CD14-positive monocyte (primary cell): ENCODE measurements at regions of chr4 and their contacts with region 1.

Region 1: DNA sequence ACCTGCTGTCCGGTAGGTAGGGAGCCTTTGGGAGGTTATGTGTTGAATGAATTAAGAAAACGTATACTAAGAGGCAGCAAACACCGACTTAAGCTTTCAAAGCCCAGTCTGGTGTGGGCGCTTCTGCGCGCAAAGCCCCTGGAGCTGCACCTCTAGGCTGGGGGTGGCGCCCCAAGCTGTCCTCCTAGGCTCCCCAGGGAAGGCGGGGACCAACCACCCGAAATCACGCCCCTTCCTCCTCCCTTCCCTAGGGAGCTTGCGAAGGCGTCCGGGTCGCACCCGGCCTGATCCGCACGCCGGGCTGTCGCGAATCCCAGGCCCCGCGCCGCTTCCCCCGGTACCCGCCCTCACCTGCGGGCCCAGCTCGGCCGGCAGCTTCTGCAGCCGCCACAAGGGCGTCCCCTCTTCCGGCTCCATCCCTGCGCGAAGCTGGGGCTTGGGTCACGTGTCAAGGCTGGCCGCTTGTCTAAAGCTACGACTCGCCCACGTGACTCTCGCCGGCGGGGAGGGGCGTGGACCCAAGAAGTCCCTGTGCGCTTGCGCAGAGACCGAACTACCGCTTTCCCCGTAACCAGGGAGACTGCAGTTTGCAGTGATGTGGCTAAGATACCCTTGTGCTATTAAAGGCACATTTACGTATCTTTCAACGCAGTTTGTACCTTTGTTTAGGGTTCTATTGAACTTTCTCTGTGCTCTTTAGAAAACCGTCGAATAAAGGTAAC is at the start of gene COMMD8:
- DNase-seq: peak; percentile 97 to 99 (median 97)
- H3K4me3 ChIP-seq: peak within 1 kb of the TSS; percentile 87 to 95 (median 91)
- H3K4me3 Mint-ChIP-seq: peak within 1 kb of the TSS; percentile 80 to 90
- H3K27ac ChIP-seq: peak within 1 kb of the TSS; percentile 57 to 89
- H3K27ac Mint-ChIP-seq: peak within 1 kb of the TSS; percentile 73 to 95 (median 84)
- H3K4me1 ChIP-seq: peaks cover 23 to 49% of the 10 kb centered on the region in 2 donors
- H3K4me1 Mint-ChIP-seq: peaks cover 38% of the 10 kb centered on the region
- H3K27me3 ChIP-seq: no peaks in the 10 kb centered on the region
- H3K27me3 Mint-ChIP-seq: no peaks in the 10 kb centered on the region
- CTCF ChIP-seq: peak; percentile 22
- polyA plus RNA-seq, gene COMMD8: 11.5 to 90.8 (median 71.8) TPM

Region 2: GRCh38 chr4:47270201-47270888 is 193.1 kb before region 1 on chr4:
- intact Hi-C with region 1: no loop called
- DNase-seq: no peak
- H3K4me3 ChIP-seq: no peak overlapping the region
- H3K4me3 Mint-ChIP-seq: no peak overlapping the region
- H3K27ac ChIP-seq: no peak overlapping the region
- H3K27ac Mint-ChIP-seq: no peak overlapping the region
- H3K4me1 ChIP-seq: no peaks in the 10 kb centered on the region
- H3K4me1 Mint-ChIP-seq: no peaks in the 10 kb centered on the region
- H3K27me3 ChIP-seq: no peaks in the 10 kb centered on the region
- H3K27me3 Mint-ChIP-seq: peaks cover 0 to 2% (median 2%) of the 10 kb centered on the region in 3 donors
- CTCF ChIP-seq: no peak

Region 3: DNA sequence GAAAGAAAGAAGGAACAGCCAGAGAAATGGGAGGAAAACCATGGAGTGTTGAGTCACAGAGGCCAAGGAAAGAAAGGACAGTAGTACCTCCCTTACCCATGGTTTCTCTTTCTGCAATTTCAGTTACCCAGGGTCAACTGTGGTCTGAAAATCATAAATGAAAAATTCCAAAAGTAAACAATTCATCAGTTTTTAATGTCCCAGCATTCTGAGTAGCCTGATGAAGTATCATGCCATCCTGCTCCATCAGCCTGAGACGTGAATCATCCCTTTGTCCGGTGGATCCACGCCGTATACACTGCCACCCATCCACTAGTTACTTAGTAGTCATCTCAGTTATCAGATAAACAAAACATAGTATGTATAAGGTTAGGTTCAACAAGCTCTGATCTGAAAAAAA is 114.1 kb before region 1 on chr4:
- intact Hi-C with region 1: no loop called
- DNase-seq: no peak
- H3K4me3 ChIP-seq: no peak overlapping the region
- H3K4me3 Mint-ChIP-seq: no peak overlapping the region
- H3K27ac ChIP-seq: no peak overlapping the region
- H3K27ac Mint-ChIP-seq: no peak overlapping the region
- H3K4me1 ChIP-seq: no peaks in the 10 kb centered on the region
- H3K4me1 Mint-ChIP-seq: no peaks in the 10 kb centered on the region
- H3K27me3 ChIP-seq: peaks cover 0 to 2% of the 10 kb centered on the region in 2 donors
- H3K27me3 Mint-ChIP-seq: peaks cover 0 to 8% (median 3%) of the 10 kb centered on the region in 3 donors
- CTCF ChIP-seq: no peak

Region 4: GRCh38 chr4:47485047-47485692 is 21.8 kb after region 1 on chr4 and contains the start of gene ATP10D:
- intact Hi-C with region 1: loop called in 1 of 2 experiments (anchors 2 kb)
- DNase-seq: peak; percentile 90 to 93 (median 91)
- H3K4me3 ChIP-seq: peak within 1 kb of the TSS; percentile 64 to 94 (median 94)
- H3K4me3 Mint-ChIP-seq: peak within 1 kb of the TSS; percentile 98
- H3K27ac ChIP-seq: peak within 1 kb of the TSS; percentile 93 to 97
- H3K27ac Mint-ChIP-seq: peak within 1 kb of the TSS; percentile 98 to 100 (median 99)
- H3K4me1 ChIP-seq: peaks cover 38 to 60% of the 10 kb centered on the region in 2 donors
- H3K4me1 Mint-ChIP-seq: peaks cover 38% of the 10 kb centered on the region
- H3K27me3 ChIP-seq: no peaks in the 10 kb centered on the region
- H3K27me3 Mint-ChIP-seq: no peaks in the 10 kb centered on the region
- CTCF ChIP-seq: no peak
- polyA plus RNA-seq, gene ATP10D: 8.4 to 16.9 (median 14.1) TPM

Region 5: GRCh38 chr4:47510506-47511143 is 47.2 kb after region 1 on chr4:
- intact Hi-C with region 1: loop called in 1 of 2 experiments (anchors 1 kb)
- DNase-seq: peak; percentile 81 to 88 (median 83)
- H3K4me3 ChIP-seq: no peak overlapping the region
- H3K4me3 Mint-ChIP-seq: no peak overlapping the region
- H3K27ac ChIP-seq: peak overlapping the region; percentile 72 to 94
- H3K27ac Mint-ChIP-seq: peak overlapping the region; percentile 91 to 98 (median 95)
- H3K4me1 ChIP-seq: peaks cover 10 to 17% of the 10 kb centered on the region in 2 donors
- H3K4me1 Mint-ChIP-seq: peaks cover 15% of the 10 kb centered on the region
- H3K27me3 ChIP-seq: no peaks in the 10 kb centered on the region
- H3K27me3 Mint-ChIP-seq: peaks cover 0 to 2% (median 2%) of the 10 kb centered on the region in 3 donors
- CTCF ChIP-seq: peak; percentile 71

Region 6: DNA sequence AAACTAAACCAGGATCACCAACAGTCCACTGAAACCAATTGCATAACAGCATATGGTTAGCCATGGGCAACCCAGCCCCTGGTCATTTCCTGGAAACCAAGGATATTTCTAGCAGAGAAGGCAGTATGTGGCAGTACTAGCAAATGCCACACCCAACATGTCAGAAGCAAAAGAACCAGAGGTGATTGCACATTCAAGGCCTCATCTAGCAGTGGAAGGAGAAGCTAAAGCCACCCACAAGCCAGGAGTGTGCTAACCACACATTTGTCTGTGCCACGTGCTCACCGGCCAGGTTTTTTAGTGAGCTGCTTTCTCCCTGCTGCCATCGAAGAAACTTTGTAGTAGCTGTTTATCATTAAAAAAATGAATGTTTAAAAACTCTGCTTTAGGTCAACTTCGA is 764.3 kb after region 1 on chr4:
- intact Hi-C with region 1: no loop called
- DNase-seq: peak; percentile 56 to 60 (median 56)
- H3K4me3 ChIP-seq: no peak overlapping the region
- H3K4me3 Mint-ChIP-seq: no peak overlapping the region
- H3K27ac ChIP-seq: peak overlapping the region; percentile 24 to 47
- H3K27ac Mint-ChIP-seq: peak overlapping the region; percentile 69 to 89 (median 77)
- H3K4me1 ChIP-seq: peaks cover 40 to 60% of the 10 kb centered on the region in 2 donors
- H3K4me1 Mint-ChIP-seq: peaks cover 58% of the 10 kb centered on the region
- H3K27me3 ChIP-seq: no peaks in the 10 kb centered on the region
- H3K27me3 Mint-ChIP-seq: no peaks in the 10 kb centered on the region
- CTCF ChIP-seq: no peak

Region 7: DNA sequence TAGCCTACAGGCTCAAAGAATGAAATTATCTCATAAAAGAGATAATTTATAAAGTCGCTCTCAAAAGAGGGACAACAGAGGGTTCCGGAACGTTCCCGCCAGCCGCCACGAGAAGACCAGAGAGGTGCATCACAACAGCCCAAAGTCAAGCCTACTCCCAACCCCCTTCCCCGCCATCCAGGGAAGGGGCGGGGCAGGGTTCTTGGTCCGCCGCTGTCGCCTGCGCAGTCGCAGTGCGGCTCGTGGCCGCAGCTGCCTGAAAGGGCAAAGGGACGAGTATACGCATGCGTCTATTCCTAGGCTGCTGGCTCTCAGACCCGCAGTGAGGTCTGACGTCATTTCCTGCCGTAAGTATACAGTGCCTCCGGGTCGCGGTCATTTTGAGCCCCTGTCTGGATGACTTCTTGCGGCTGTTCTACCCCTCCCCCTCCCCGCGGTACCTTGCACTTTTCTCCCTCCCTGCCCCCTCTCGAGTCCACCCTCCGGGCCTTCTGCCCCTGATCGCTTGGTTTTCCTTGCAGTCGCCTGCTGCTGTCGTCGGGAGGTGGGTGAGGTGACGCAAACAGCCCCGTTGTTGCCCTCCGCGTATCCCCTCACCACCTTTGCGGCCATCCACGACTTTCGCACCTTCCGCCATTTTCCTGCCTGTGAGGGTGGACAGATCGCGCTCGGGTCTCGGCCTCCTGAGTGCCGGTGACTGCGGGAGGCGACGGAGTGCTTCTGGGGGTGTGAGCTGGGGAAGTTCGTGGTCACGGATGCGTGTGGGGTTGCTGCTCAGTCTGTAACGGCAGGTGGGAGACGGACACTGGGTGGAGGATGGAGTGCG is 1367.5 kb after region 1 on chr4 and contains the start of gene OCIAD1:
- intact Hi-C with region 1: loop called in 1 of 2 experiments (anchors 5 kb)
- DNase-seq: peak; percentile 99 to 100 (median 100)
- H3K4me3 ChIP-seq: peak within 1 kb of the TSS; percentile 46 to 92 (median 81)
- H3K4me3 Mint-ChIP-seq: peak within 1 kb of the TSS; percentile 97 to 100
- H3K27ac ChIP-seq: peak within 1 kb of the TSS; percentile 85 to 99
- H3K27ac Mint-ChIP-seq: peak within 1 kb of the TSS; percentile 100
- H3K4me1 ChIP-seq: peaks cover 8 to 19% of the 10 kb centered on the region in 2 donors
- H3K4me1 Mint-ChIP-seq: peaks cover 12% of the 10 kb centered on the region
- H3K27me3 ChIP-seq: peaks cover 0 to 3% of the 10 kb centered on the region in 2 donors
- H3K27me3 Mint-ChIP-seq: peaks cover 2 to 4% (median 2%) of the 10 kb centered on the region in 3 donors
- CTCF ChIP-seq: no peak
- polyA plus RNA-seq, gene OCIAD1: 112 to 145 (median 139) TPM